H1 (cell line): ENCODE measurements at regions of chr12 and their contacts with region 1.

Region 1: GRCh38 chr12:18153826-18154225 is 63.8 kb upstream of the RERGL start:
- DNase-seq: no peak
- H3K4me3 ChIP-seq: no peak overlapping the region
- H3K27ac ChIP-seq: no peak overlapping the region
- H3K4me1 ChIP-seq: peaks cover 0 to 3% (median 3%) of the 10 kb centered on the region in 4 experiments; a peak in 3 of 7 replicates
- H3K27me3 ChIP-seq: no peaks in the 10 kb centered on the region
- CTCF ChIP-seq: no peak
- EP300 ChIP-seq: no peak
- POLR2A ChIP-seq: no peak
- RAD21 ChIP-seq: no peak

Region 2: DNA sequence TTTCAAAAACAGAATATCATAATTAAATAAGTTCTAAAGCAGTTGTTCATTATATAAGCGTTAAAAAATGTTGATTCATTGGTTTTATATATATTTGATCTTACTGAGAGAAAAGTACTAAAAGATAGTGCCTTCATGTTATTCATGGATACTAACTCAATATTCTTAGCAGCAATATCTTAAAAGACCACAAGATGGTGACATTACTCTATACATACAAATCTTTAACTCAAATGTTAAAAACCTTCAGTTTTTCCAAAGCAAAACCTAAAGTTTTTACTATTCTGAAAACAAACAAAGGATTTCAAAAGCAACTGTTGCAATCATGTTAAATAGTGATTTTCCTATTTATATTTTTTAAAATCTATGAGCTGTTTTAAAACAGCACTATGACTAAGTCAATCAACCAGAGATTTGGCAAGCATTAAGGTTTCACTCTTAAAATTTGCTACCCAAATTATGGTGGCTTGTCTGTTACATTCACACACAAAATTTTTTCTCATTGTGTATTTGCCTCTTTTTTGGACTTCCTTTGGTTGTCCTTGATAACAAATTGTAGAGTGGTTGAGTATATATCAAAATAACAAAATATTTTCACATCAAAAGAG is 13.7 kb before region 1 on chr12:
- CTCF ChIA-PET with region 1: interaction called, 13 read pairs
- POLR2A ChIA-PET with region 1: no interaction called
- DNase-seq: no peak
- H3K4me3 ChIP-seq: no peak overlapping the region
- H3K27ac ChIP-seq: no peak overlapping the region
- H3K4me1 ChIP-seq: no peaks in the 10 kb centered on the region
- H3K27me3 ChIP-seq: no peaks in the 10 kb centered on the region
- CTCF ChIP-seq: peak in 1 of 3 experiments; percentile 39; a peak in 2 of 4 replicates
- EP300 ChIP-seq: no peak
- POLR2A ChIP-seq: no peak
- RAD21 ChIP-seq: peak in 1 of 2 experiments; percentile 65; a peak in 3 of 4 replicates